SK-N-SH (cell line): ENCODE measurements at regions of chr22 and their contacts with region 1.

Region 1: GRCh38 chr22:23281406-23282088 is 101.2 kb downstream of the BCR start:
- DNase-seq: peak; percentile 93
- H3K4me3 ChIP-seq: peak overlapping the region in 1 of 2 experiments; percentile 47; a peak in 1 of 4 replicates
- H3K27ac ChIP-seq: peak overlapping the region; percentile 43 to 59; a peak in 3 of 4 replicates
- H3K4me1 ChIP-seq: peaks cover 6 to 14% of the 10 kb centered on the region in 2 experiments; a peak in 3 of 4 replicates
- H3K27me3 ChIP-seq: no peaks in the 10 kb centered on the region
- CTCF ChIP-seq: peak; percentile 86
- EP300 ChIP-seq: no peak
- RAD21 ChIP-seq: peak; percentile 99

Region 2: GRCh38 chr22:23047265-23047664 is 234.3 kb before region 1 on chr22:
- CTCF ChIA-PET with region 1: no interaction called
- POLR2A ChIA-PET with region 1: no interaction called
- DNase-seq: no peak
- H3K4me3 ChIP-seq: no peak overlapping the region
- H3K27ac ChIP-seq: no peak overlapping the region
- H3K4me1 ChIP-seq: no peaks in the 10 kb centered on the region
- H3K27me3 ChIP-seq: no peaks in the 10 kb centered on the region
- CTCF ChIP-seq: no peak
- EP300 ChIP-seq: no peak
- RAD21 ChIP-seq: no peak

Region 3: GRCh38 chr22:23137905-23138561 is 143.5 kb before region 1 on chr22:
- CTCF ChIA-PET with region 1: interaction called, 10 read pairs
- POLR2A ChIA-PET with region 1: no interaction called
- DNase-seq: no peak
- H3K4me3 ChIP-seq: no peak overlapping the region
- H3K27ac ChIP-seq: no peak overlapping the region
- H3K4me1 ChIP-seq: peaks cover 6 to 9% of the 10 kb centered on the region in 2 experiments; a peak in 1 of 4 replicates
- H3K27me3 ChIP-seq: no peaks in the 10 kb centered on the region
- CTCF ChIP-seq: no peak
- EP300 ChIP-seq: no peak
- RAD21 ChIP-seq: no peak

Region 4: GRCh38 chr22:23163665-23164064 is 117.9 kb before region 1 on chr22:
- CTCF ChIA-PET with region 1: interaction called, 587 read pairs
- POLR2A ChIA-PET with region 1: no interaction called
- DNase-seq: no peak
- H3K4me3 ChIP-seq: no peak overlapping the region
- H3K27ac ChIP-seq: no peak overlapping the region
- H3K4me1 ChIP-seq: peaks cover 0 to 12% of the 10 kb centered on the region in 2 experiments; a peak in 1 of 4 replicates
- H3K27me3 ChIP-seq: no peaks in the 10 kb centered on the region
- CTCF ChIP-seq: no peak
- EP300 ChIP-seq: no peak
- RAD21 ChIP-seq: no peak

Region 5: DNA sequence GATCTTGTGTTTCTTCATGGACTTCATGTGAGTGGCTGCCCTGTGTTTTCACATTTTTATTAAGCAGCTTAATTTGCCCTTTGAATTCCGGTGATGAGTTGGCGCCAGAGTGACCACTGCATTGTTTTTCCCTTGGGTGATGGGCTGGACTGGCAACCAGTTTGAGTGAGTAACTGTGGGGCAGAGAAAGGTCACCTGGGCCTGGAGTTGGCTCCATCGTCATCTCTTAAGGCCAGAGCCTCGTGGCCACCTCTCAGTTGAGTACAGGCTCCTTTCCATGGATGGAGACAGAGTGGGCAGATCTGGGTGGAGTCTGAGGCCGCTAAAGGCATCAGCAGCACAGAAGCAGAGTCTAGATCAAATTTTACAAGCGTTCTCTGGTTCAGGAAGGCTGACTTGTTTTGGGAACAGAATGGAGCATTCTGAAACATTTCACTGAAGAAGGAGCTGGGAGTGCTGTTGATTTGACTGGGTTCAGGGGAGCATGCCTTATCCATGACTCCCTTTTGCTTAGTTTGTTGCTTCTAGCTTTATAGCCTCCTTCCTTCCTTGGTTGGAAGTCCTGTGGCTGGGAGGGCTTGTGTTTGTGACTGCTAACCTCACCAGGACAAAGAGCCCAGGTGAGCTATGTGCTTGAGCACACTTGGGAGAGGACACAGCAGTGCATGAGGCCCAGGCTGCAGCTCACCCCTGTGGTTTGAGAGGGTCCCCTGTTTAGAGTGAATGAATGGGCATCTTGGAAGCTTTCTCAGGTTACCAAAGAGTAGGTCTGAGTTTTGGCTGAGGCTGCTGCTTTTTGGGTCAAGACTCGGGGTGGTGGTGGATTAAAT is 93.5 kb before region 1 on chr22:
- CTCF ChIA-PET with region 1: interaction called, 587 read pairs
- POLR2A ChIA-PET with region 1: interaction called, 3 read pairs
- DNase-seq: no peak
- H3K4me3 ChIP-seq: no peak overlapping the region
- H3K27ac ChIP-seq: no peak overlapping the region
- H3K4me1 ChIP-seq: peaks cover 5 to 29% of the 10 kb centered on the region in 2 experiments; a peak in 1 of 4 replicates
- H3K27me3 ChIP-seq: no peaks in the 10 kb centered on the region
- CTCF ChIP-seq: no peak
- EP300 ChIP-seq: no peak
- RAD21 ChIP-seq: no peak

Region 6: DNA sequence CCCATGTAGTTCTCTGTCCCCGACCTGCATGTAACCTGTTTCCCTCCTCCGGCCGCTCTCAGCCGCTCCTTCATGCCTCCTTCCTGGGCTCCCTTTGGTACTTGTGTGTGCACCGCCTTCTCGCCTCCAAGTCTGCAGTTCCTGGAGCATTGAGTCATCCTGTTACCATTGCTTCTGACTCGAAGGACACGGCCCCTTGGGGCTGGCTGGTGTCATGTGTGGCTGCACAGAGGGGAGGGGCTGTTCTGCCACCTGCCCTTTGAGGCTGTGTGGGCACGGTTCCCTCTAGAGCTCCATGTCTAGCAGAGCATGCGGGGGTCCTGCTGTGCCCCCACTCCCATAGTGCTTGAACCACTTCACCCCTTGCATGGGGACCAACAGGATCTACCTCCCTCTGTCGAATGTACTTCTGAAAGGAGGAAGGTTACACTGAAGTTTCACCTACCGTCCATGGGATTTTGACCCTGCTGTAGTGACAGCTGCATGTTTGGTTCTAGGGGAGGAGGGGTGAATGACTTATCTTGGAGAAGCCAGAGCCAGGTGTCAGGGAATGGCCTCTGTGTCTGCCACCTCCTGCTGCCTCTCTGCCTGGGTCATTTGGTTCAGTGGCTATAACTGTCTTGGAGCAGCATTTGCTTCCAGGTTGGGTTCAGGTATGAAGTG is 61.6 kb before region 1 on chr22:
- CTCF ChIA-PET with region 1: interaction called, 22 read pairs
- POLR2A ChIA-PET with region 1: no interaction called
- DNase-seq: no peak
- H3K4me3 ChIP-seq: no peak overlapping the region
- H3K27ac ChIP-seq: peak overlapping the region in 1 of 2 experiments; percentile 39; a peak in 1 of 4 replicates
- H3K4me1 ChIP-seq: peaks cover 32 to 74% of the 10 kb centered on the region in 2 experiments; a peak in 3 of 4 replicates
- H3K27me3 ChIP-seq: no peaks in the 10 kb centered on the region
- CTCF ChIP-seq: no peak
- EP300 ChIP-seq: no peak
- RAD21 ChIP-seq: no peak

Region 7: DNA sequence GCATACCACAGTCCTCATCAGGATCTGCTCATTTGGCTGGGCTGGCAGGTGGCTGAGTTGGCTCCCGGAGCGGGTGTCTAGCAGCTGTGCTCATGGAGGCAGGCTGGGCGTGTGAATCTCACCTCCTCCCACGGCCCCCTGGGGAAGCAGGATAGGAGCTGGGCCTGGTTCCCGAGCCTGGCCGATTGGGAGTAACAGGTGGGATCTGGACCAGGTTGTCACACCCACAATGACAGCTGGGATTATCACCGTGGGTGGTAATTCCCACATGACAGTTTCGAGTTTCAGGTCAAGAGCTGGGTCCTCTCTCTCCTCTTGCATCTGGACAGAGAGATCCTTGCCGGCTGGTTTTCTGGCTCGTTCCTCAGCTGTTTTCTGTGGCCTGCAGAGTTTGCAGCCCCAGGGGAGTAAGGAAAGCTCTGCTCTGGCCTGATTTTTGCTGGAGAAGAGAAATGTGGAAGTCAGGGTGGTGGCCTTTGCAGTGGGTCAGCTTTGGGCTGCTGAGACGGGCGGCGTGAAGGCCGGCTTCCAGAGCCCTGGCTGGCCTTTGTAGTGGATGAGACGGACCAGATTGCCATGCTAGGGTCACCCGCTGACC is 44.2 kb before region 1 on chr22:
- CTCF ChIA-PET with region 1: interaction called, 13 read pairs
- POLR2A ChIA-PET with region 1: no interaction called
- DNase-seq: no peak
- H3K4me3 ChIP-seq: no peak overlapping the region
- H3K27ac ChIP-seq: peak overlapping the region in 1 of 2 experiments; percentile 60; a peak in 2 of 4 replicates
- H3K4me1 ChIP-seq: peaks cover 11 to 62% of the 10 kb centered on the region in 2 experiments; a peak in 2 of 4 replicates
- H3K27me3 ChIP-seq: no peaks in the 10 kb centered on the region
- CTCF ChIP-seq: no peak
- EP300 ChIP-seq: no peak
- RAD21 ChIP-seq: no peak

Region 8: GRCh38 chr22:23298042-23298441 is 16.5 kb after region 1 on chr22:
- CTCF ChIA-PET with region 1: interaction called, 42 read pairs
- POLR2A ChIA-PET with region 1: no interaction called
- DNase-seq: no peak
- H3K4me3 ChIP-seq: no peak overlapping the region
- H3K27ac ChIP-seq: no peak overlapping the region
- H3K4me1 ChIP-seq: no peaks in the 10 kb centered on the region; a peak in 1 of 4 replicates
- H3K27me3 ChIP-seq: no peaks in the 10 kb centered on the region
- CTCF ChIP-seq: no peak
- EP300 ChIP-seq: no peak
- RAD21 ChIP-seq: no peak